Right cardiac atrium (tissue), 5 donors: ENCODE measurements at regions of chr17 and their contacts with region 1.

Region 1: DNA sequence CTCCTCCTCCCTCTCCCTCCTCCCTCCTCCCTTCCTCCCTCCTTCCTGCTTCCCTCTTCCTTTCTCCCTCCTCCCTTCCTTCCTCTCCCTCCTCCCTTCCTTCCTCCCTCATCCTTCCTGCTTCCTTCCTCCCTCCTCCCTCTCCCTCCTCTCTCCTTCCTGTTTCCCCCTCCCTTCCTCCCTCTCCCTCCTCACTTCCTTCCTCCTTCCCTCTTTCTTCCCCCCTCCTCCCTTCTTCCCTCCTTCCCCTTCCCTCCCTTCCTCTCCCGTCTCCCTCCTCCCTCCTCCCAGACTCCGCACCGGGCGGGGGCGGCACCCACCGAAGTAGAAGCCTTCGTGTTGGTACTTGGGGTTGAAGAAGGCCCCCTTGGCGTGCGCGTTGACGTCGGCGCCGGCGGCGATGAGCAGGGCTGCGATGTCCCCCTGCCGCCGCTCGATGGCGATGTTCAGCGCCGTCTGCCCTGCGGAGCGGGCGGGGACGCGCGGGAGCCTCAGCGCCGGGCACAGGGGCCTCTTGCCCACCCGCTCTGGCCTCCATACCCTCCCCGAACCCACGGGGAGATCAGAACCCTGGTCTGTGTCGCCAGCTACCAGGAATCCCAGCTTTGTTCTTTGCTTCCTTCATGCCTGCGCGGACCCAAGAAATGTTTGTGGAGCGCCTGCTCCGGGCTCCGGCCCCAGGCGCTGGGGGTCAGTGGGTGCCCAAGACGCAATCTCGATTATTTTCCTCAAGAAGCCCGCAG is 22.2 kb downstream of the TRPV3 start:
- DNase-seq: peak; percentile 81 to 91 (median 90)
- ATAC-seq: peak; percentile 77 to 84
- H3K4me3 ChIP-seq: peak overlapping the region; percentile 41
- H3K27ac ChIP-seq: peak overlapping the region; percentile 4
- H3K4me1 ChIP-seq: peaks cover 8% of the 10 kb centered on the region
- H3K27me3 ChIP-seq: no peaks in the 10 kb centered on the region

Region 2: GRCh38 chr17:3636154-3636907 is 100.9 kb after region 1 on chr17 and contains the starts of genes CTNS and SHPK:
- intact Hi-C with region 1: loop called in 2 of 4 experiments (anchors 10 kb)
- DNase-seq: peak; percentile 97 to 99 (median 99)
- ATAC-seq: peak; percentile 97 to 99
- H3K4me3 ChIP-seq: peak within 1 kb of the TSS; percentile 79
- H3K27ac ChIP-seq: peak within 1 kb of the TSS; percentile 93
- H3K4me1 ChIP-seq: peaks cover 7% of the 10 kb centered on the region
- H3K27me3 ChIP-seq: no peaks in the 10 kb centered on the region
- total RNA-seq, gene CTNS: 7.7 to 10.5 (median 8.4) TPM
- total RNA-seq, gene SHPK: 4.6 to 5.8 (median 4.9) TPM